ENCODE measurements at regions of chr3 and their contacts with region 1.

Region 1: GRCh38 chr3:112097378-112097777 is 11.2 kb downstream of the C3orf52 start:
- DNase-seq: peak; percentile 79
- H3K4me3 Mint-ChIP-seq: no peak overlapping the region
- H3K27ac Mint-ChIP-seq: peak overlapping the region; percentile 60
- H3K4me1 Mint-ChIP-seq: peaks cover 79% of the 10 kb centered on the region
- H3K27me3 Mint-ChIP-seq: no peaks in the 10 kb centered on the region
- CTCF ChIP-seq: no peak

Region 2: GRCh38 chr3:111956995-111957734 is 140.2 kb before region 1 on chr3:
- CTCF ChIA-PET with region 1: interaction called, 11 read pairs
- intact Hi-C with region 1: no loop called
- DNase-seq: no peak
- H3K4me3 Mint-ChIP-seq: no peak overlapping the region
- H3K27ac Mint-ChIP-seq: peak overlapping the region; percentile 7
- H3K4me1 Mint-ChIP-seq: peaks cover 24% of the 10 kb centered on the region
- H3K27me3 Mint-ChIP-seq: no peaks in the 10 kb centered on the region
- CTCF ChIP-seq: no peak

Region 3: GRCh38 chr3:112074721-112075497 is 22.5 kb before region 1 on chr3:
- CTCF ChIA-PET with region 1: no interaction called
- intact Hi-C with region 1: loop called (anchors 2 kb)
- DNase-seq: peak; percentile 83
- H3K4me3 Mint-ChIP-seq: peak overlapping the region; percentile 49
- H3K27ac Mint-ChIP-seq: peak overlapping the region; percentile 93
- H3K4me1 Mint-ChIP-seq: peaks cover 26% of the 10 kb centered on the region
- H3K27me3 Mint-ChIP-seq: no peaks in the 10 kb centered on the region
- CTCF ChIP-seq: no peak